ENCODE measurements at regions of chr3 and their contacts with region 1.

Region 1: DNA sequence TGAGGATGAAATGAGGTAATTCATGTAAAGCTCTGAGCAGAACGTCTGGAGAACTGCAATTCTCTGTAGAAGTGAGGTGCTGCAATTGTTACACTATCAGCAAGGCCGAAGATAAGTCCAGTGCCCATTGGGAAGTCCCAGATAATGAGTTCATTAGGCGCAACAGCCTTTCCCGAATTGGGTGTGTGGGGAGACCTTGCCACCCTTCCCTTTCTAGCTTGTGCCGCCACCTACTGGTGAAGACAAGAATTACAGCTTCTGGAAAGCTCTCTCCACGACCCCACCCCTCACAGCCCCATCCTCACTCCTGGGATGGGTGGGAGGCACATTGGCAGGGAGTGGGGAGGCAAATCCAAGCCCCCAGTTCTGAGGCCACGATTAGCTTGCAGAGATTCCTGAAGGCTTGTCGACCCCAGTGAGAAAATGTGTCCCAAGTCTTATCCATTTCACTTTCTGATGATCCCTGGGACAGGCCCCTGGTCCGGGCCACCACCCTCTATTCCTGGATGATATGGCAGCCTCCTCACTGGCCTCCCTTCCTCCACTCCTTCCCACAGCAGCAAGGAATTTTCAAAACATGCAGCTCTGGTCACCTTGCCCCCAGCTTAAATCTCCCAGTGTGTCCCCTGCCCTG is 36.4 kb downstream of the FAM3D start:
- DNase-seq: peak; percentile 69
- ATAC-seq: peak; percentile 65
- H3K4me3 Mint-ChIP-seq: no peak overlapping the region
- H3K27ac Mint-ChIP-seq: no peak overlapping the region
- H3K4me1 Mint-ChIP-seq: peaks cover 1% of the 10 kb centered on the region
- H3K27me3 Mint-ChIP-seq: no peaks in the 10 kb centered on the region

Region 2: GRCh38 chr3:58568572-58569286 is 61.5 kb before region 1 on chr3:
- CTCF ChIA-PET with region 1: interaction called, 60 read pairs
- POLR2A ChIA-PET with region 1: no interaction called
- DNase-seq: peak; percentile 79
- ATAC-seq: peak; percentile 65
- H3K4me3 Mint-ChIP-seq: no peak overlapping the region
- H3K27ac Mint-ChIP-seq: no peak overlapping the region
- H3K4me1 Mint-ChIP-seq: peaks cover 4% of the 10 kb centered on the region
- H3K27me3 Mint-ChIP-seq: peaks cover 3% of the 10 kb centered on the region

Region 3: DNA sequence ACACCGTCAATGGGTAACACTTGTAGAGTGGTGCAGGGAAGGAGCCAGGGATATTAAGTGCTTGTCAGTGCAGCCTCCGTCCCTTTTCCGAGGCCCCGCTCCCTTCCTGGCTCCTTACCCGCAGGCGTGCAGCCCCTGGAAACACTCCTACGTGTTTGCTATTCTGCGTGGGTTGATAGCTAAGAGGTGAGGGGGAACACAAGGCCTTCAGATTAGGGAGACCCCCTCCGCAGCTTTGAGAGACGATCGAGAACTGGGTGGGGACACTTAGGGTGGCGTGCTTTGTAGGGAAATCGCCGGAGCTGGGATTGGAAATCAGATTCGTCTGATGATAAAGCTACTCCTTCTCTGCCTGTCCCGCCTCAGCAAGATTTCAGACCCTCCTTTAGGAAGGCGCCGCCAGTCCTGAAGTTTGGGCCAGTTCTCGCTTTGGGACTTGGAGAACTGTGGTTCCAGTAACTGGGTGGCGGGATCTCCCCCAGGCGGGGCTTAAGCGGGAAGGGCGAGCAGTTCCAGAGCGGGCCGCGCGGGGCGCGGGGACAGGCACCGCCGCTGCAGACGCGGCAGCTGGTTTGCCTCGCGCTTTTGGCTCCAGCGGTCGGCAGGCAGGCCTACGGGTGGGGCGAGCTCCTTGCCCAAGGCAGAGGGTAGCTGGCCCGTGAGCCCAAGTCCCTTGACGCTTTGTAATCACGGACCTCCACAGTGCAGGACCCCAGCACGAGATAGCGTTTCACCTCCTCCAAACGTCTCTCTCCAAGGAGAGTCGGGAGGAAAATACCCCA is 45.0 kb before region 1 on chr3:
- CTCF ChIA-PET with region 1: interaction called, 10 read pairs
- POLR2A ChIA-PET with region 1: no interaction called
- DNase-seq: peak; percentile 62
- ATAC-seq: peak; percentile 95
- H3K4me3 Mint-ChIP-seq: peak overlapping the region; percentile 79
- H3K27ac Mint-ChIP-seq: no peak overlapping the region
- H3K4me1 Mint-ChIP-seq: peaks cover 16% of the 10 kb centered on the region
- H3K27me3 Mint-ChIP-seq: peaks cover 39% of the 10 kb centered on the region

Region 4: GRCh38 chr3:58617338-58617761 is 12.8 kb before region 1 on chr3:
- CTCF ChIA-PET with region 1: interaction called, 13 read pairs
- POLR2A ChIA-PET with region 1: no interaction called
- DNase-seq: no peak
- ATAC-seq: no peak
- H3K4me3 Mint-ChIP-seq: no peak overlapping the region
- H3K27ac Mint-ChIP-seq: no peak overlapping the region
- H3K4me1 Mint-ChIP-seq: no peaks in the 10 kb centered on the region
- H3K27me3 Mint-ChIP-seq: no peaks in the 10 kb centered on the region

Region 5: DNA sequence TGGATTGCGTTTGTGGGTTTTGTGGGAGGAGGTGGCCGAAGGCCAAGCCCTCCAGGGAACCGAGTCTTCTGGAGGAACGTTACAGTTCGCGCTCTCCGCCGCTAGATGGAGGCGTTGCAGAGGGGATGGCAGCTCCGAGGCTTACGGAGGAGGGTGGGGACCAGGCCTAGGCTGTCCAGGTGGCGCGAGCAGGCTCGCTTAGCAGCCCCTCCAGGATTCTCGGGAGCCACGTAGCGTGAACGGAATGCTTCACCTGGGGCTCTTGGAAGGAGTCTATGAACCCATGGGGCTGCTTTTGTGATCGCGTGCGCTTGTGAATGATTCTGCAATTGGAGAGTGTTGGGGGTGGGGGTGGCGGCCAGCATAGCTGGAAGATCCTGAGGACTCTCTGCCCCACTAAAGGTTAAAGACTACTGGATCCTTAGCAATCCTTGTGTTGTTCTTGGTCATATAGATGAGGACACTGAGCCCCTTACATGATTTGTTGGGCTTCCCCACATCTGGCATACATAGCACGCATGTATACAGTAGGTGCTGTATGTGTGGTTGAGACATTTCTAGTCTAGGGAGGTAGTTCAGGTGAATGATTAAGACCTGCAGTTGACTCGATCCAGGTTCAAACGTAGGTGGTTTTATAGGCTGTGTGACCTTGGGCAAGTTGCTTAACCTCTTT is 10.6 kb after region 1 on chr3:
- CTCF ChIA-PET with region 1: interaction called, 21 read pairs
- POLR2A ChIA-PET with region 1: no interaction called
- DNase-seq: peak; percentile 67
- ATAC-seq: peak; percentile 91
- H3K4me3 Mint-ChIP-seq: no peak overlapping the region
- H3K27ac Mint-ChIP-seq: no peak overlapping the region
- H3K4me1 Mint-ChIP-seq: no peaks in the 10 kb centered on the region
- H3K27me3 Mint-ChIP-seq: no peaks in the 10 kb centered on the region

Region 6: DNA sequence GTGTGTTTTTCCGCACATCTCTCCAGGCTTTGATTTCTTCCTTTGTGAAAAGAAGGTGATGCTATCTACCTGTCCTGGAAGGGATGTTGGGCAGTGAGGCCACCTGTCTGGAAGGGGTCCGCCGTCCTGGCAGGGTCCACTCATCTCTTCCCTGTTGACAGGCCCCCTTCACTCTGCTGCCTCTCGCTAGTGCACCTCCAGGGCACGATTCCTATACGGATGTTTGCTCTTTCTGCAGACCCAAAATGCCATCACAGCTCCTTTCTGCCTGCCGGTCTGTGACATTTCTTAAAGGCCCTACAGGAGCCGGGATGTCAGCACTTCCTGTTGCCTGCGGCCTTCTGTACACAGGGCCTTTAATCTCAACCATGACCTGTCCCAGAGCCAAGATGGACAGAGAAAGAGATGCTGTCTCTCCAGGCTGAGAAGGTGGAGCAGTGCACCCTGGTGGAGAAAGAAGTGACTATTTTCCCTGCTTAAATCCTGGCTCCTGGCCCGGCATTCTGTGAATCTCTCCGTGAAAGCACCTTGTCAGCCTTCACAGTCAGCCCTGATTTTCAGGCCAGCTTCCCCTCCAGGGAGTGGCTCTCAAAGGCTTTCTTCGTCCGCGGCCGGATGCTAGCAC is 29.0 kb after region 1 on chr3:
- CTCF ChIA-PET with region 1: no interaction called
- POLR2A ChIA-PET with region 1: no interaction called
- DNase-seq: no peak
- ATAC-seq: no peak
- H3K4me3 Mint-ChIP-seq: no peak overlapping the region
- H3K27ac Mint-ChIP-seq: no peak overlapping the region
- H3K4me1 Mint-ChIP-seq: no peaks in the 10 kb centered on the region
- H3K27me3 Mint-ChIP-seq: peaks cover 3% of the 10 kb centered on the region

Region 7: DNA sequence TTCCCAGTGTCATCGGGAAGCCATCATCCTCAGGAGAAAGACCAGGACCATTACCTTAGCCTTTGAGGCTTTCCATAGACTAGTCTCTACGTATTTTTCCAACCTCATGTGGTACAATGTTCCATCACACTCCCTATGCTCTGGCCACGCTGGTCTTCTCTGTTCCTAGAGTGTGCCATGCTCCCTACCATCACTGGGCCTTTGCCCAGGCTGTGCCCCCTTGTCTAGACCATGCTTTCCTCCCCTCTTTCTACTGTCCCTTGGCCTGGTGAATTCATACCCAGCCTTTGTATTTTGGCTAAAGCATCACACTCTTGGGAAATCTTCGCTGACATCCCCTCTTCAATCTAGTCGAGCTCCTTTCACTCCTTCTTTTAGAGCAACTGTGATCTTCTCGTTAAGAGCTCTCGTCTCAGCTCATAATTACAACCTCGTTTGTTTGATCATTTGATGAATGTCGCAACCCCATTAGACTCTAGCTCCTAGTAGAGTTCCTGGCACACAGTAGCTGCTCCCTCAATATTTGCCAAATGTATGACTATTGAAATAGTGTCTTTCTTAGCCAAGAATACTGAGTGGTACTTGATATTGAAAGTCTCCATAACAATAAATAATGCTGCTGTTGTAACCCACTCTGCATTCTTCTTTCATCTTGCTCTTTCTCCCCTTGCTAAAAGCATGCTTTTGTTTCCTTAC is 136.5 kb after region 1 on chr3:
- CTCF ChIA-PET with region 1: no interaction called
- POLR2A ChIA-PET with region 1: no interaction called
- DNase-seq: no peak
- ATAC-seq: no peak
- H3K4me3 Mint-ChIP-seq: no peak overlapping the region
- H3K27ac Mint-ChIP-seq: no peak overlapping the region
- H3K4me1 Mint-ChIP-seq: no peaks in the 10 kb centered on the region
- H3K27me3 Mint-ChIP-seq: no peaks in the 10 kb centered on the region

Region 8: GRCh38 chr3:59185586-59186369 is 555.6 kb after region 1 on chr3:
- CTCF ChIA-PET with region 1: no interaction called
- POLR2A ChIA-PET with region 1: no interaction called
- DNase-seq: no peak
- ATAC-seq: no peak
- H3K4me3 Mint-ChIP-seq: no peak overlapping the region
- H3K27ac Mint-ChIP-seq: no peak overlapping the region
- H3K4me1 Mint-ChIP-seq: no peaks in the 10 kb centered on the region
- H3K27me3 Mint-ChIP-seq: peaks cover 4% of the 10 kb centered on the region

Measured in activated CD8-positive, alpha-beta T cell treated with anti-CD3 and anti-CD28 coated beads, Interleukin-2, amount 10 ng/mL, durations not matched to agents 7 days and 5 days (primary cell).